ENCODE measurements at regions of chr9 and their contacts with region 1.

Region 1: DNA sequence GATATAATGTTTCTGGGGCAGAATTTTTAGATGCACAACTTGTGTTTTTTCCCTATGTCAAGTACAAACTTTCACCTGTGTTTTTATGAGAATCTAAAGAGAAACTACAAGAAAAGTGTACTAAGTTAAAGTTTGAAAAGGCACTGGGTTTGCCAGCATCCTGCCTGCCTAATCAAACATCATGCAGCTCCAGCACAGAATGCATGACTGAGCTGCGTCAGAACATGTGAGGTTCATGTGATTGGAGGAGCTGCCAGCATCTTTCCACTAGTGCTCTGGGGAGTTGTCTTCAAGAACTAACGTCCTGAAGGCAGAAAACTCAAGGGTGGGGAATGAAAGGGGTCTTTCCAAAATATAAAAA is 46.1 kb upstream of the RIC1 start:
- DNase-seq: peak; percentile 91
- ATAC-seq: peak; percentile 73
- H3K4me3 ChIP-seq: no peak overlapping the region
- H3K27ac ChIP-seq: peak overlapping the region; percentile 89
- H3K4me1 ChIP-seq: peaks cover 53% of the 10 kb centered on the region
- H3K27me3 ChIP-seq: no peaks in the 10 kb centered on the region
- CTCF ChIP-seq: no peak
- EP300 ChIP-seq: peak in 1 of 2 experiments; percentile 75; a peak in 3 of 4 replicates
- POLR2A ChIP-seq: peak; percentile 14; the same call in 1 of the 2 replicates
- RAD21 ChIP-seq: no peak

Region 2: DNA sequence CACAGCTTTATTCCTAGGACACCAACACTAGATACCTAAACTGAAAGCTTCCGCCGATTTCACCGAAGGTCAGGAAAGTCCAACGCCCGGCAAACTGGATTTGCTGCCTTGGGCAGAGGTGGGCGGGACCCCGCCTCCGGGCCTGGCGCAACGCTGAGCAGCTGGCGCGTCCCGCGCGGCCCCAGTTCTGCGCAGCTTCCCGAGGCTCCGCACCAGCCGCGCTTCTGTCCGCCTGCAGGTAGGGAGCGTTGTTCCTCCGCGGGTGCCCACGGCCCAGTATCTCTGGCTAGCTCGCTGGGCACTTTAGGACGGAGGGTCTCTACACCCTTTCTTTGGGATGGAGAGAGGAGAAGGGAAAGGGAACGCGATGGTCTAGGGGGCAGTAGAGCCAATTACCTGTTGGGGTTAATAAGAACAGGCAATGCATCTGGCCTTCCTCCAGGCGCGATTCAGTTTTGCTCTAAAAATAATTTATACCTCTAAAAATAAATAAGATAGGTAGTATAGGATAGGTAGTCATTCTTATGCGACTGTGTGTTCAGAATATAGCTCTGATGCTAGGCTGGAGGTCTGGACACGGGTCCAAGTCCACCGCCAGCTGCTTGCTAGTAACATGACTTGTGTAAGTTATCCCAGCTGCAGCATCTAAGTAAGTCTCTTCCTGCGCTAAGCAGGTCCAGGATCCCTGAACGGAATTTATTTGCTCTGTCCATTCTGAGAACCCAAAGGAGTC is 132.3 kb before region 1 on chr9 and contains the start of gene CD274:
- CTCF ChIA-PET with region 1: interaction called, 172 read pairs
- POLR2A ChIA-PET with region 1: interaction called, 58 read pairs
- RAD21 ChIA-PET with region 1: interaction called, 149 read pairs
- SMC1A ChIA-PET with region 1: interaction called, 161 read pairs
- in situ Hi-C with region 1: no loop called
- intact Hi-C with region 1: loop called (anchors 1 kb)
- DNase-seq: no peak
- ATAC-seq: peak; percentile 75
- H3K4me3 ChIP-seq: peak within 1 kb of the TSS; percentile 72
- H3K27ac ChIP-seq: peak within 1 kb of the TSS; percentile 97
- H3K4me1 ChIP-seq: peaks cover 46% of the 10 kb centered on the region
- H3K27me3 ChIP-seq: no peaks in the 10 kb centered on the region
- CTCF ChIP-seq: peak; percentile 57 to 86 (median 81)
- EP300 ChIP-seq: 0 out of 4 replicates have a peak, but pooled peaks of 1 of the 2 experiments have one; percentile 33
- POLR2A ChIP-seq: peak; percentile 95
- RAD21 ChIP-seq: peak; percentile 92
- polyA plus RNA-seq, gene CD274: 9.4 to 12.2 TPM

Region 3: DNA sequence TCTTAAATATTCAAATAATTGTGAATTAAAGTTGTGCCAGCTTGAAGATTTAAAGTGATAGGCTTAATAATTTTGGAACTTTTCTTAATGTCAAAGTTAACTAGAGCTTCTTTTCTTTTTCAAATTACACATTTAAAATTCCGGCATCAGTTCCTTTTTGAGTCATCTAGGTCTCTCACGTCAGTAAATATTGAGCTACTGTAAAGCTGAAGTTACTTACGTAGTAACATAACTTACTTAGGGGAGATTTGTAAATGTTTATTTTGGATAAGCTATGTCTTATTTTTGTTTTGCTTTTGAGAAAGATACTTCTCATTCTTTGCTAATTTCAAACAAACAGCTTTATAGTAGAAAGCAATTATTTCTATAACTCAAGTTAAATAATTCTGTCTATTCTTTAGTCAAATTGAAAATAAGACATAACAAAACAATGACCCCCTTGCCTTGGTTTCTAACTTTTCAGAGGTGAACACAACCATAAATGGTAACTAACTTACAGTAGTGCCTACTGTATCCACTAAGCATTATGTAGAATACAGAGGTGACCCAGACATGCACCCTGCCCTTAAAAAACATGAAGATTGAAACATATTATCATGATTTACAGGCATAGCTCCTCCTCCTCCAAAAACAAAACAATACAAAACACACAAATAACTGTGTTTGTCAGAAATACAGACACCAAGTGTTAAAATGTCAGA is 102.7 kb before region 1 on chr9:
- CTCF ChIA-PET with region 1: interaction called, 4 read pairs
- POLR2A ChIA-PET with region 1: interaction called, 7 read pairs
- RAD21 ChIA-PET with region 1: interaction called, 38 read pairs
- SMC1A ChIA-PET with region 1: interaction called, 74 read pairs
- in situ Hi-C with region 1: no loop called
- intact Hi-C with region 1: no loop called
- DNase-seq: no peak
- ATAC-seq: peak; percentile 85
- H3K4me3 ChIP-seq: no peak overlapping the region
- H3K27ac ChIP-seq: peak overlapping the region; percentile 62
- H3K4me1 ChIP-seq: peaks cover 27% of the 10 kb centered on the region
- H3K27me3 ChIP-seq: no peaks in the 10 kb centered on the region
- CTCF ChIP-seq: no peak
- EP300 ChIP-seq: peak; percentile 37 to 47; a peak in 2 of 4 replicates
- POLR2A ChIP-seq: no peak
- RAD21 ChIP-seq: no peak

Region 4: DNA sequence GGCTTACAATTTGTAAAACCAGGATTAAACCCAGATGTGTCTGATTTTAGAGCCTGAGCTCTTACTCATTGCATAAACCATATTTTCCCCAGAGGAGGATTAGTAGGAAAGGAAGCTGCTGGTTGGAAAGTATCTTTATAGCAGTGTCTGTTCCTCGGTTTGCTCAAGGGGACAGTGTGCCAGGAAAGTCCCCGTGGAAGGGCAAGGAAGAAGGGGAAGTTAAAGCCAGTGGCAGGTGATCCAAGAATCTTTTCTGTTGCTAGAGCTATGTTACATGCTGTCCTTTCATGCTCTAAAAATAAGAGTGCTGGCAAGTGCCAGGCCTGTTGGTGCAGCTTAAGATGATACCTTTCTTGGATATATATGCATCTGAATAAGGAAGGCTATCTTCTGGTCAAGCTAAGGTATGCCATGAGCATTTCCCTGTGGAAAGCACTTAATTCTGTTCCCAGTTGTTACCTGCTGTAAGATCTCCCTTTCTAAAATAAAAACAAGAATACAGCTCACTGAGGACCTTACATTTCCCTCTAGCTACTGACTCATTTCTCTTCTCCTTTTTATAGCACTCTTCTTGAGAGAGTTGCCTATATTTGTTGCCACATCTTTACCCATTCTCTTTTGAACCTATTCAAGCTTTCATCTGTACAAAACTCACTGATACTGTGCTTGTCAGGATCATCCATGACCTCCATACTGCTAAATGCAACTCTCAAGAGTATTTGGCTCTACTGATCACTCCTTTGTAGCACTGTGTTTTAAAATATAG is 64.5 kb before region 1 on chr9:
- CTCF ChIA-PET with region 1: interaction called, 32 read pairs
- POLR2A ChIA-PET with region 1: interaction called, 66 read pairs
- RAD21 ChIA-PET with region 1: interaction called, 146 read pairs
- SMC1A ChIA-PET with region 1: interaction called, 311 read pairs
- in situ Hi-C with region 1: no loop called
- intact Hi-C with region 1: loop called (anchors 2 kb)
- DNase-seq: no peak
- ATAC-seq: peak; percentile 49
- H3K4me3 ChIP-seq: peak overlapping the region; percentile 35; the same call in 1 of the 2 replicates
- H3K27ac ChIP-seq: peak overlapping the region; percentile 58
- H3K4me1 ChIP-seq: peaks cover 47% of the 10 kb centered on the region
- H3K27me3 ChIP-seq: no peaks in the 10 kb centered on the region
- CTCF ChIP-seq: no peak
- EP300 ChIP-seq: no peak
- POLR2A ChIP-seq: no peak
- RAD21 ChIP-seq: 0 out of 2 replicates have a peak, but pooled peaks have one; percentile 17

Region 5: DNA sequence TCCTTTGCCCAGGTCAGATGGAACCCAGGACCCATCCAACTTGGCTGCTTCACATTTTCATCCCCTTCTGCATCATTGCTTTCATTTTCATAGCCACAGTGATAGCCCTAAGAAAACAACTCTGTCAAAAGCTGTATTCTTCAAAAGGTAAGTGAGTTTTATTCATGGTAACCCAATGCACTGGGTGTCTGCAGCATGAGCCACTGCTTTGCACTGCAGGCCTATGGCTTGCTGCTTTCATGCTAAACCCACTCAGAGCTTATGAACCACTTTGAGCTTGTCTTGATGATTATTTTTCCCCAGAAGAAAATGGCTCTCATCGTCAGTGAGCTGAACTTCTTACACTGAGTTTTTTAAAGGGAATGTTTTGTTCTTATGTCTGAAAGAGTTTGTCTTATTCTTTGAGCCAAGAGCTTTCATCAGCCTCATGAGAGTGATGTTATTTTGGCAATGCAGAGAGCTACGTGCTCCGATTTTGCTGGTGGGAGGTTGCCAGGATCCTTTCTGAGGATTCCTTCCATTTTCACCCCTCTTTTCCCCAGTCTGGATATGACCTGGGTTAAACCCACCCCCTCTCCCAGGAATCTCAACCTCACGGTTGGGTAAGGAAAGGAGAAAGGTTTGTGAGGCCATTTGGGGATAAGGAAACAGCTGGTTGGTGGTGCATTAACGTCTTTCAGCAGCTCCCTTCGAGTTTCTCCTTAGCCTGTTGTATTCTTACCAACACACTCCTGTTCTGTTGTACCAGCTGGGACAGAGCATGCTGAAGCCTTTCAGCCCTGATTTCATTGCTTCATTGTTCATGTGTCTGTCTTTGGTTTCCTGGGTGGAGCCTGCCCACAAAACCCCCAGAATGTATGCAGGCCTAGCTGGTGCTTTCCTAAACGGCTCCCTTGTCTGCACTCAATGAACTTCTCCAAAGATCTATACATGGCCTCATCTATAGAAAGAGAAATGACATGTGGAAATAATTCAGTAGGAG is 24.9 kb before region 1 on chr9:
- CTCF ChIA-PET with region 1: interaction called, 16 read pairs
- POLR2A ChIA-PET with region 1: interaction called, 19 read pairs
- RAD21 ChIA-PET with region 1: interaction called, 164 read pairs
- SMC1A ChIA-PET with region 1: interaction called, 389 read pairs
- in situ Hi-C with region 1: no loop called
- intact Hi-C with region 1: no loop called
- DNase-seq: no peak
- ATAC-seq: peak; percentile 88
- H3K4me3 ChIP-seq: no peak overlapping the region
- H3K27ac ChIP-seq: peak overlapping the region; percentile 66
- H3K4me1 ChIP-seq: peaks cover 27% of the 10 kb centered on the region
- H3K27me3 ChIP-seq: no peaks in the 10 kb centered on the region
- CTCF ChIP-seq: no peak
- EP300 ChIP-seq: no peak
- POLR2A ChIP-seq: no peak
- RAD21 ChIP-seq: no peak

Region 6: GRCh38 chr9:5743109-5743508 is 160.3 kb after region 1 on chr9:
- CTCF ChIA-PET with region 1: no interaction called
- POLR2A ChIA-PET with region 1: no interaction called
- RAD21 ChIA-PET with region 1: no interaction called
- SMC1A ChIA-PET with region 1: no interaction called
- in situ Hi-C with region 1: no loop called
- intact Hi-C with region 1: no loop called
- DNase-seq: no peak
- ATAC-seq: no peak
- H3K4me3 ChIP-seq: no peak overlapping the region
- H3K27ac ChIP-seq: no peak overlapping the region
- H3K4me1 ChIP-seq: no peaks in the 10 kb centered on the region
- H3K27me3 ChIP-seq: no peaks in the 10 kb centered on the region
- CTCF ChIP-seq: no peak
- EP300 ChIP-seq: no peak
- POLR2A ChIP-seq: no peak
- RAD21 ChIP-seq: no peak

Measured in GM12878 (cell line).